Dorsolateral prefrontal cortex (tissue), 120 donors: ENCODE measurements at regions of chr17 and their contacts with region 1.

Region 1: GRCh38 chr17:75109407-75110233 is at the start of gene ARMC7:
- DNase-seq: peak; percentile 80 to 95 (median 88)
- H3K4me3 ChIP-seq: peak within 1 kb of the TSS; percentile 66 to 98 (median 88)
- H3K27ac ChIP-seq: peak within 1 kb of the TSS in 54 of 59 donors; percentile 5 to 89 (median 76)
- H3K27me3 ChIP-seq: no peaks in the 10 kb centered on the region
- CTCF ChIP-seq: peak in 36 of 56 donors; percentile 5 to 67 (median 34)
- total RNA-seq, gene ARMC7: 7.0 to 16.8 (median 11.3) TPM

Region 2: DNA sequence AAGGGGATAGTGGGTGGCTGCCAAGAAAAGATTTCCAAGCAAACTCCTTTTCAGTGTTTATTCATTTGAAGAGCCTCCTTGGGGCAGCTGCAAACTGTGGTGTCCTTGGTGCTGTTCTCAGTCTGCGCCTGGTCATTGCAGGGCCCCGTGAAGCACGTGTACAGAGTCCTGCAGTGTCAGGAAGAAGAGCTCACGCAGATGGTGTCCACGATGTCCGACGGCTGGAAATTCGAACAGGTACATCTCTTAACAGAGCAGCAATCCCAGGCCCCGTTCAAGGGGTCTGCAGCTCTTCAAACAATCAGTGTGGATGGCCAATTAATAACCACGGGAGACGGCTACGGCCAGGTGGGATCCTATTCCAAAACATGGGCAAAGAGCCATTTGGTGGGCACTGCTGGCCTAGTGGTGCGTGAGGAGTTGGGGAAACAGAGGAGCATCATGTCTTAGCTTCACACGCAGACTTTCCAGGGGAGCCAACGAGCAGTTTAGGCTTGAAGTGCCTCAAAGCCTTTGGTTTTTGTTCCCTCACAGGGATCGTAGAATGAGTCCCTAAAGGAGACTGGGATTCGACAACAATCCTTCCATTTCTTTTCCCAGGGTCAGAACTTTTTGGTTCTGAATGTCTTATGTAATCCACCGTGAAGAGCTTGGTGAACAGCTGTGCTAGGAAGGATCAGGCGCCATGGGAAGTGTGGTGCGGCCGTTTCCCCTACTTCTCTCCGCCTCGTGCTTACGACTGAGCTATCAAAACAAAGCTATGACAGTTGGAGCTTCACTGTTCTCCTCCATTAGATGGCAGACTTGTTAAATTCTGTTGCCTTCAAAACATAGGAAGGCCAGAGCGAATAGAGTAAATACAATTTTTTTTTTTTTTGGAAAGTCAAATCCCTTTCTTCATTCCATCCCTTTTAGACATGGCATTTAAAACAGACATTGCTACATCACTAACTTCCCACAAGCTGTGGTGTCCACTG is 50.0 kb before region 1 on chr17:
- intact Hi-C with region 1: loop called (anchors 5 to 10 kb)
- DNase-seq: peak in 7 of 10 donors; percentile 50 to 76 (median 61)
- H3K4me3 ChIP-seq: peak overlapping the region in 15 of 59 donors; percentile 2 to 38 (median 15)
- H3K27ac ChIP-seq: peak overlapping the region; percentile 1 to 94 (median 86)
- H3K27me3 ChIP-seq: no peaks in the 10 kb centered on the region
- CTCF ChIP-seq: peak; percentile 22 to 76 (median 63)

Region 3: DNA sequence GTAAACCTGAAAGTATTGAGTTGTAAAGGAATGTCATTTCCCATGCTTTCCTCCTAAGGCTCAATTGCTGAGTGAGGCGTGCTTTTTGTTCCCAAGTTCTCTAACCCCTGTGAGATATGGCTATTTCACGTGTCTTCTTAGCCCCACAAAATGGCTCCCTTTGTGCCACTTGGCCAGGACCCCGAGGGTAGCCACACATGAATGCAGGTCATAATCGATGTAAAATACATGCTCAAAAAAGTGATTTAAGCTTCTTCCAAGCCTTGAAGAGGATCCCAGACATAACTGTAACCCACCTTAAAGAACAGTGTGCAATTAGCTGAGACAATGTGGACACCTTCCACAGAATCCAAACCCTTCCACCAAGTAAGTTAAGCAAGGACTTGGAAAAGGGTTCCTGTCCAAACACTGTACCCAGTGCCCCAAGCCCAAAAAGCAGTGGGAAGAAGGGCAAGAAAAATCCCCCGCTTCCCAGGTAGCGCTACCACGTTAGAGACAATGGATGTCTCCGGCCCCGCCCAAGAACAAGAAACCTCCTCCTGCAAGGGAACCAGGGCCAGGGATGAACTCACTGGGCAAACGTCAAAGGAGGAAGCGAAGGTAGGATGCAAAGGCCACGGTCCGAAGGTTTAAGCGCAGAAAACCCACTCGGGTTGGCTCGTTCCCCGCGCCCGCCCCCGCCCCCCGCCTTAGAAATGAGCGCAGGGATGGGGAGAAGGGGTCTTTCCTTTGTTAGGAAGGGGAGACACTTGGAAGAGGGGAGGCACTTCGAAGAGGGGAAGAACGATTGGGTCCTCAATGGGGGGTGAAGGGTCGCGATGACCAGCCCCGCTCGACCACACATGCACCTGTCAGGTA is 43.5 kb after region 1 on chr17:
- intact Hi-C with region 1: no loop called
- DNase-seq: peak in 4 of 10 donors; percentile 30 to 67 (median 36)
- H3K4me3 ChIP-seq: peak overlapping the region; percentile 57 to 98 (median 83)
- H3K27ac ChIP-seq: peak overlapping the region in 6 of 59 donors; percentile 36 to 86 (median 78)
- H3K27me3 ChIP-seq: no peaks in the 10 kb centered on the region
- CTCF ChIP-seq: no peak

Region 4: GRCh38 chr17:75182569-75183450 is 73.2 kb after region 1 on chr17 and contains the start of gene SUMO2:
- intact Hi-C with region 1: loop called (anchors 5 kb)
- DNase-seq: peak; percentile 77 to 90 (median 86)
- H3K4me3 ChIP-seq: peak within 1 kb of the TSS; percentile 65 to 98 (median 89)
- H3K27ac ChIP-seq: peak within 1 kb of the TSS; percentile 86 to 100 (median 99)
- H3K27me3 ChIP-seq: no peaks in the 10 kb centered on the region
- CTCF ChIP-seq: peak in 26 of 56 donors; percentile 1 to 53 (median 24)
- total RNA-seq, gene SUMO2: 161 to 320 (median 250) TPM

Region 5: GRCh38 chr17:75199886-75200618 is 90.4 kb after region 1 on chr17:
- intact Hi-C with region 1: loop called (anchors 5 kb)
- DNase-seq: no peak
- H3K4me3 ChIP-seq: no peak overlapping the region
- H3K27ac ChIP-seq: no peak overlapping the region
- H3K27me3 ChIP-seq: no peaks in the 10 kb centered on the region
- CTCF ChIP-seq: no peak

Region 6: GRCh38 chr17:75261336-75262111 is 151.9 kb after region 1 on chr17 and contains the starts of genes GGA3 and MRPS7:
- intact Hi-C with region 1: loop called in 1 of 2 experiments (anchors 10 kb)
- DNase-seq: peak; percentile 92 to 96 (median 95)
- H3K4me3 ChIP-seq: peak within 1 kb of the TSS; percentile 69 to 100 (median 98)
- H3K27ac ChIP-seq: peak within 1 kb of the TSS; percentile 84 to 100 (median 98)
- H3K27me3 ChIP-seq: no peaks in the 10 kb centered on the region
- CTCF ChIP-seq: peak in 19 of 56 donors; percentile 7 to 55 (median 22)
- total RNA-seq, gene GGA3: 41.9 to 89.7 (median 60.2) TPM
- total RNA-seq, gene MRPS7: 33.7 to 71.4 (median 51.1) TPM